ENCODE measurements at regions of chr10 and their contacts with region 1.

Region 1: GRCh38 chr10:45500304-45500703 is 126.3 kb downstream of the ALOX5 start:
- DNase-seq: no peak
- ATAC-seq: no peak
- H3K4me3 ChIP-seq: no peak overlapping the region
- H3K27ac ChIP-seq: no peak overlapping the region
- H3K4me1 ChIP-seq: no peaks in the 10 kb centered on the region
- H3K27me3 ChIP-seq: no peaks in the 10 kb centered on the region

Region 2: DNA sequence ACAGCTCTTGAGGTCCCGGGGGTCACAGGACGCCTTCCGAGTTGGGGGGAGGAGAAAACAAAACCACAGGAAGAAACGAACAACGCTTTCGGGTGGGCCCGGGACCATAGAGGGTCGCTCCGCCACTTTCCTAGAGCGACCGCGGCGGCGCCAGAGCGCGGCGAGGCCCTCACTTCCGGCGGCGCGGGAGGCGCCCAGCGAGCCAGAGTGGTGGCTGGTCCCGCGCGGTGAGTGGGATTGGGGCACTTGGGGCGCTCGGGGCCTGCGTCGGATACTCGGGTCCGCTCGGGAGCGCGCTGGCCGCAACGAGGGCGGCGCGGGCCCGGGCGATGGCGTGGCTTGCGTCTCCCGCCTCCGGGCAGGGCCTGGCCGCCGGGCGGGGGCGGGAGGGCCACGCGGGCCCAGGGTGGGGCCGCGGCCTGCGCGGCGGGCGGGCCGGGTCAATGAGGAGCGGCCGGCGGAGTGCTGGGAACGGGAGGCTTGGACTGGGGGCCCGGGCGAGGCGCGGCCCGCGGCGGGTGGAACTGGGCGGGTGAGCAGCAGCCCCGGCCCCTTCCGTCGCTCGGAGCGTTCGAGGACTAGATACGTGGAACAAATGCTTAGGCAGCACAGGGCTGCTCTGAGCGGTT is 499.4 kb before region 1 on chr10 and contains the start of gene ZNF22:
- intact Hi-C with region 1: no loop called
- DNase-seq: peak; percentile 83 to 91
- ATAC-seq: peak; percentile 74
- H3K4me3 ChIP-seq: peak within 1 kb of the TSS; percentile 69 to 85
- H3K27ac ChIP-seq: peak within 1 kb of the TSS; percentile 80 to 85
- H3K4me1 ChIP-seq: peaks cover 3 to 7% of the 10 kb centered on the region in 2 donors
- H3K27me3 ChIP-seq: no peaks in the 10 kb centered on the region
- total RNA-seq, gene ZNF22: 19.6 to 20.9 TPM

Region 3: DNA sequence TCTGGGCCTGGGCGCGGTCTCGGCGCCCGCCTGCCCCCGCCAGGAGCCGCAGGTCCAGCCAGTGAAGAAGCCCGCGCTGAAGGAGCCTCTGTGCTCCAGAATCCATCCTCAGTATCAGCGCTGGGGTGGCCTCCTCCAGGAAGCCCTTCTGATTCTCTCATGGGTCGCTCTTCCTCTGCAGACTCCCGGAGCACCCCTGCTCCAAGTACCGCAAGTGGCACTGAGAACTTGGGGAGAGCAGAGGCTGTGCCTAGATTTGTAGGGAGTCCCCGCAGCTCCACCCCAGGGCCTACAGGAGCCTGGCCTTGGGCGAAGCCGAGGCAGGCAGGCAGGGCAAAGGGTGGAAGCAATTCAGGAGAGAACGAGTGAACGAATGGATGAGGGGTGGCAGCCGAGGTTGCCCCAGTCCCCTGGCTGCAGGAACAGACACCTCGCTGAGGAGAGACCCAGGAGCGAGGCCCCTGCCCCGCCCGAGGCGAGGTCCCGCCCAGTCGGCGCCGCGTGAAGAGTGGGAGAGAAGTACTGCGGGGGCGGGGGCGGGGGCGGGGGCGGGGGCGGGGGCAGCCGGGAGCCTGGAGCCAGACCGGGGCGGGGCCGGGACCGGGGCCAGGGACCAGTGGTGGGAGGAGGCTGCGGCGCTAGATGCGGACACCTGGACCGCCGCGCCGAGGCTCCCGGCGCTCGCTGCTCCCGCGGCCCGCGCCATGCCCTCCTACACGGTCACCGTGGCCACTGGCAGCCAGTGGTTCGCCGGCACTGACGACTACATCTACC is 126.5 kb before region 1 on chr10 and contains the start of gene ALOX5:
- intact Hi-C with region 1: no loop called
- DNase-seq: peak; percentile 86 to 89
- ATAC-seq: peak; percentile 73
- H3K4me3 ChIP-seq: peak within 1 kb of the TSS; percentile 2 to 5
- H3K27ac ChIP-seq: no peak within 1 kb of the TSS
- H3K4me1 ChIP-seq: no peaks in the 10 kb centered on the region
- H3K27me3 ChIP-seq: no peaks in the 10 kb centered on the region
- total RNA-seq, gene ALOX5: 25.3 to 62.5 TPM

Region 4: DNA sequence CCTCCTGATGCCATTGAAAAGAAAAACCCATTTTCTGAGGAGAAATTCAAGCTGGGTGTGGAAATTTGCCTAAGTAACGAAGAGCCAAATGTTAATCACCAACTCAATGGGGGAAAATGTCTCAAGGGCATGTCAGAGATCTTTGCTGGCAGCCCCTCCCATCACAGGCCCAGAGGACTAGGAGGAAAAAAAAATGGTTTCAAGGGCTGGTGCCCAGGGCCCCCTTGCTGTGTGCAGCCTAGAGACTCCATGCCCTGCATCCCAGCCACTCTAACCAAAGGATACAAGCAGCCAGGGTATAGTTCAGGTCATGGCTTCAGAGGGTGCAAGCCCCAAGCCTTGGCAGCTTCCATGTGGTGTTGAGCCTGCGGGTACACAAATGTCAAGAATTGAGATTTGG is 20.0 kb before region 1 on chr10:
- intact Hi-C with region 1: loop called in 1 of 2 experiments (anchors 2 kb)
- DNase-seq: no peak
- ATAC-seq: no peak
- H3K4me3 ChIP-seq: no peak overlapping the region
- H3K27ac ChIP-seq: no peak overlapping the region
- H3K4me1 ChIP-seq: no peaks in the 10 kb centered on the region
- H3K27me3 ChIP-seq: no peaks in the 10 kb centered on the region